Activated naive CD8-positive, alpha-beta T cell treated with anti-CD3 and anti-CD28 coated beads, Interleukin-2, amount 10 ng/mL, durations not matched to agents 7 days and 5 days (primary cell): ENCODE measurements at regions of chr7 and their contacts with region 1.

Region 1: DNA sequence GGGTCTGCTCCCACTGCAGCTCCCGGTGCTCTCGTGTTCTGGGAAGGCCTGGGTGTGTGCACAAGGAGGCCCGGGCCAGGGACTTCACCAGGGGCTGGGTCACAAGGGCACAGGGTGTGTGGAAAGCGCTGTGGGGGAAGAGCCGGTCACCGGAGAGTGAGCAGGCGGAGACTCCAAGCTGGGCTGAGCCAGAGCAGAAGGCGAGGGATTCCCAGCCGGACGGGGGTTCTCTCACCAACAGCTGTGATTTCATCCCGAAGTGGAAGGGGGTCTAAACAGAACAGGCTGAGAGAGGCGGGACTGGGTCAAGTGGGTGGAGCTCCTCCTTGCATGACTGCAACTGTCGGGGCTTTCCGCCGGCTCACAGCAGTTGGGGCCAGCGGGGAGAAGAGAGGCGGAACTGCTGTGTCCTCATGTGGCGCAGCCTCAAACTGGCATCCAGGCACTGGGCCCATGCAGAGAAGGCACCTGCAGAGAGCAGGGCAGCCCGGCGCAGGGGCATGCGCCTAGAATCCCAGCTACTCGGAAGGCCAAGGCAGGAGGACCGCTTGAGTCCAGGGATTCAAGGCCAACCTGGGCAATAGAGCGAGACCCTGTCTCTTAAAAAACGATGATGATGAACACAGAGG is 7.6 kb upstream of the ORAI2 start:
- DNase-seq: peak; percentile 82
- ATAC-seq: peak; percentile 84
- H3K4me3 Mint-ChIP-seq: peak overlapping the region; percentile 89
- H3K27ac Mint-ChIP-seq: peak overlapping the region; percentile 99
- H3K4me1 Mint-ChIP-seq: peaks cover 45% of the 10 kb centered on the region
- H3K27me3 Mint-ChIP-seq: no peaks in the 10 kb centered on the region

Region 2: DNA sequence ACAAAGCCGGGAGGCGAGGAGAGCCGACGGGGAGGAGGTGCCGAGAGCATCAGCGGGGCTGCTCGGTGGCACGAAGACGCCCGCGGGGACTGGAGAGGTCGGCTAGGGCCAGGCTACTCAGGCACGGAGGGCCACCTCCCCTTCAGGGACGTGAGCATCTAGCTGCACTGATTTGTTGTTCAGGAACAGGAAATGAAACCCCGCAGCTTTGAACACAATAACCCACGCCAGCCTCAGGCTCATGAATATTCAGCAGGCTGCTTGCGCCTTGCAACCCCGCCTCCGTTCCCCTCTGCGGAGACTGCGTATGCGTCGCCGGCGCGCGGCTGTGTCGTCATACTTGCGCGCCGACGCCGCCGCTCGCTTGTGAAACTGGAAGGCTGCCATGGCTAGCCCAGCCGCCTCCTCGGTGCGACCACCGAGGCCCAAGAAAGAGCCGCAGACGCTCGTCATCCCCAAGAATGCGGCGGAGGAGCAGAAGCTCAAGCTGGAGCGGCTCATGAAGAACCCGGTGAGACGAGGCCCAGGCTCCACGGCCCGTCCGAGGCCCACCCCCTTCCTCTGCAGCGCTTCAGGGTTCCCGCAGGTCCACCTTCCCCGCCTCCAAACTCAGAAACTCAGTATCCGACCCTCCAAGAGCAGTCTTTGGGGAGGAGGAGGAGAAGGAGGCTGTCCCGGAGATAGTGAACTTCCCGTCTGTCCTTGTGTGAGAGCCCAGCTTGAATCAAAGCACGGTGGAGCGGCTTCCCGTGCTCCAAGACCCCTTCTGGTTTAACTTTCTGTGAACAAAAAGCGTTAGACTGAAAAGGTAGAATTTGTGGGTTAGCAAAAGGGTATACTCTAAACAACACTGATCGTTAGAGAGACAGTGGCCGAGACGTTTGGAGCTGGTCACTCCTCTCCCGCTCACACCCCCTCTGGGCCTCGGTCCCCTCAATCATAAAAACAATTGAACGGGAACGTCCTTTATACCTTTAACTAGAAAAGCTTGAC is 29.4 kb before region 1 on chr7 and contains the start of gene PRKRIP1:
- POLR2A ChIA-PET with region 1: interaction called, 11 read pairs
- DNase-seq: peak; percentile 86
- ATAC-seq: peak; percentile 95
- H3K4me3 Mint-ChIP-seq: peak within 1 kb of the TSS; percentile 94
- H3K27ac Mint-ChIP-seq: peak within 1 kb of the TSS; percentile 91
- H3K4me1 Mint-ChIP-seq: peaks cover 13% of the 10 kb centered on the region
- H3K27me3 Mint-ChIP-seq: no peaks in the 10 kb centered on the region
- total RNA-seq, gene PRKRIP1: 37.8 to 39.1 TPM

Region 3: GRCh38 chr7:102412548-102412947 is 13.2 kb before region 1 on chr7:
- POLR2A ChIA-PET with region 1: interaction called, 88 read pairs
- DNase-seq: no peak
- ATAC-seq: peak; percentile 18
- H3K4me3 Mint-ChIP-seq: no peak overlapping the region
- H3K27ac Mint-ChIP-seq: peak overlapping the region; percentile 51
- H3K4me1 Mint-ChIP-seq: peaks cover 38% of the 10 kb centered on the region
- H3K27me3 Mint-ChIP-seq: no peaks in the 10 kb centered on the region

Region 4: GRCh38 chr7:102440078-102440795 is 14.5 kb after region 1 on chr7:
- POLR2A ChIA-PET with region 1: interaction called, 21 read pairs
- DNase-seq: no peak
- ATAC-seq: no peak
- H3K4me3 Mint-ChIP-seq: no peak overlapping the region
- H3K27ac Mint-ChIP-seq: no peak overlapping the region
- H3K4me1 Mint-ChIP-seq: peaks cover 6% of the 10 kb centered on the region
- H3K27me3 Mint-ChIP-seq: no peaks in the 10 kb centered on the region